KBM-7 (cell line): ENCODE measurements at regions of chrX and their contacts with region 1.

Region 1: GRCh38 chrX:56729152-56729850 is at the start of gene NBDY:
- DNase-seq: peak; percentile 76

Region 2: GRCh38 chrX:56281789-56282188 is 447.5 kb before region 1 on chrX:
- in situ Hi-C with region 1: loop called (anchors 25 kb)
- DNase-seq: peak; percentile 46

Region 3: GRCh38 chrX:57044245-57044644 is 314.9 kb after region 1 on chrX:
- in situ Hi-C with region 1: no loop called
- DNase-seq: no peak